HEK293 (cell line): ENCODE measurements at regions of chr19 and their contacts with region 1.

Region 1: GRCh38 chr19:32345261-32346207 is at the start of gene ZNF507:
- H3K4me3 ChIP-seq: peak within 1 kb of the TSS; percentile 91
- H3K27ac ChIP-seq: peak within 1 kb of the TSS; percentile 87
- H3K4me1 ChIP-seq: peaks cover 32% of the 10 kb centered on the region
- CTCF ChIP-seq: peak; percentile 91

Region 2: DNA sequence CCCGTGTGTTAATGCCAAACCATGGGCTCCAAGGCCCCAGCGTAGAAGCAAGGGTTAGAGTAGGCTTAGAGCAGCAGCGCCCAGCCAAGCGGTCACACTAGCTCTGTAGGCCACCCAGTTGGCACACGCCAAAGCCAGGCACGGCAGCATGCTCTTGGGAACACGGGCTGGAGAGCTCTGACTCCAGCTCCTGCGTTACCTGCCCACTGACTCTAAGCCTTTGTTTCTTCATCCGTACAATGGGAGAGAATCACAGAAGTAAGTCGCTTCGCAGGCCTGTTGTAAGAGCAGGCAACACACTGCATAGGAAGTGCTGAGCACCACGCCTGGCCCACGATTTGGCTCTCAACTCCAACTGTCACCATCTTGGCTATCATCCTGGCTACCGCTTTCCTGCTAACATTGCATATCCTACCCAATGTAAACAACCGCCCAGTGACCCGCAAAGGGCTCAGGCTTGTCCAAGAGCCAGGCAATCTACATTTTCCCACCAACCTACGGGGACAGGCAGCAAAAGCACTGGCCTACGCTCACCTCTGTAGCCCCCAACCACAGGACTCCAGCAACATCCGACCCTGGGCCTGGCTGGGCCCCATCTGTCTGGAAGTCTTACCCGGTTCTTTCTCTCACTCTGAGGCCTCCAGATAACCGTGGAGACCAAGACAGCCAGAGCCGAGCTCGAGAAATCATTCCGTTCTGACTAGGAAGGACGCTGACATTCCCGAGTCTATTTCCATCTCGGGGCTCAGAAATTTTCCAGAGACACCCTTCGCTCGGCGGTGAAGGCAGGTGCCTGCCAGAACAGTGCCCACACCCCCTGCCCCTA is 91.6 kb before region 1 on chr19:
- CTCF ChIA-PET with region 1: no interaction called
- POLR2A ChIA-PET with region 1: no interaction called
- H3K4me3 ChIP-seq: no peak overlapping the region
- H3K27ac ChIP-seq: no peak overlapping the region
- H3K4me1 ChIP-seq: no peaks in the 10 kb centered on the region
- CTCF ChIP-seq: no peak

Region 3: GRCh38 chr19:32287811-32288227 is 57.7 kb before region 1 on chr19:
- CTCF ChIA-PET with region 1: no interaction called
- POLR2A ChIA-PET with region 1: no interaction called
- H3K4me3 ChIP-seq: no peak overlapping the region
- H3K27ac ChIP-seq: no peak overlapping the region
- H3K4me1 ChIP-seq: peaks cover 3% of the 10 kb centered on the region; the same call in 1 of the 2 replicates
- CTCF ChIP-seq: peak; percentile 93

Region 4: DNA sequence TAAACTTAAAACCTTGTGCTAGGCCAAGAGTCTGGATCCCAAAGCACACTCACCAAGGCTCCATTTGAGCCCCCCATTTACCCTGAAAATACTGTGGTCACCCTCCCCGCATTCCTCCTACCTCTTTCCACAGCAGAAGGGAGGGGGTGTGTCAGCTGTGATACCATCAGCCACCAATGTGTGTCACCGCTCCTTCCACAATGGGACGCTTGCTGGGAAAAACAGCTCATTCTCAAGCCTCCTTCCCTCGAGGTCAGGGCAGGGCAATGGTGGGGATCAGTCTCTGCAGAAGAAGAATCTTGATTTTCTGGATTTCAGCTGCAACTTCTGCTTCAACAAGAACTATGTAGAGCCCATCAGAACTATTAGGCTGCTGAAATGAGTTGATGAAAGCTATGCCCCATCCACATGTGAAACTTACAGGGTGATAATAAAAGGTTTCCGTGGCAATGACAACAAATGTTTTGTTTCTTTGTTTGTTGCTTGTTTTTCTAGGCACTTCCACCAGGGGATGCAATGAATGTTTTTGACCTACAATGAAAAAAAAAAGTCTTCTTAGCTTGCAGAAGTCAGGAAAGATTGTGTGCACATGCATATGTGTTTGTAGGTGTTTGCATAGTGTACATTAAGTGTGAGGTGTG is 26.5 kb before region 1 on chr19:
- CTCF ChIA-PET with region 1: interaction called, 12 read pairs
- POLR2A ChIA-PET with region 1: interaction called, 3 read pairs
- H3K4me3 ChIP-seq: no peak overlapping the region
- H3K27ac ChIP-seq: no peak overlapping the region
- H3K4me1 ChIP-seq: no peaks in the 10 kb centered on the region
- CTCF ChIP-seq: peak; percentile 38; the same call in 1 of the 2 replicates

Region 5: DNA sequence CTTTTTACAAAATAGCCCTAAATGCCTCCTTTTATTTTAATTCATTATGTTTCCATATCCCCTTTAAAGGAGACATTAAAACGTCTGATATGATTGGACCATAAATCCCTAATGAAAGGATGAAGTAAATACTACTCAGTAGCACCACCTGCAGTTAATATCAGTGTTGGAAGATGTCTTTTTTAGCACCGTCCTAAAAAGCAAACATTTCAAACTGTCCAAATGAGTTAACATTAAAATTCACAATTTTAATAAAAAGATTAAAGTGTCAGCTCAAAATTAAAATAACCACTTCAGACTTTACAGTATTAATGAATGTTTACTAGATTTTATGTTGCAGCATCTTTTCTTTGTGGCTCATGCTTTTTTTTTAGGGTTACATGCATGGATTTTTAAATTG is 12.2 kb after region 1 on chr19:
- CTCF ChIA-PET with region 1: interaction called, 27 read pairs
- POLR2A ChIA-PET with region 1: interaction called, 6 read pairs
- H3K4me3 ChIP-seq: no peak overlapping the region
- H3K27ac ChIP-seq: no peak overlapping the region
- H3K4me1 ChIP-seq: no peaks in the 10 kb centered on the region; the same call in 1 of the 2 replicates
- CTCF ChIP-seq: no peak